ENCODE measurements at regions of chr5 and their contacts with region 1.

Region 1: DNA sequence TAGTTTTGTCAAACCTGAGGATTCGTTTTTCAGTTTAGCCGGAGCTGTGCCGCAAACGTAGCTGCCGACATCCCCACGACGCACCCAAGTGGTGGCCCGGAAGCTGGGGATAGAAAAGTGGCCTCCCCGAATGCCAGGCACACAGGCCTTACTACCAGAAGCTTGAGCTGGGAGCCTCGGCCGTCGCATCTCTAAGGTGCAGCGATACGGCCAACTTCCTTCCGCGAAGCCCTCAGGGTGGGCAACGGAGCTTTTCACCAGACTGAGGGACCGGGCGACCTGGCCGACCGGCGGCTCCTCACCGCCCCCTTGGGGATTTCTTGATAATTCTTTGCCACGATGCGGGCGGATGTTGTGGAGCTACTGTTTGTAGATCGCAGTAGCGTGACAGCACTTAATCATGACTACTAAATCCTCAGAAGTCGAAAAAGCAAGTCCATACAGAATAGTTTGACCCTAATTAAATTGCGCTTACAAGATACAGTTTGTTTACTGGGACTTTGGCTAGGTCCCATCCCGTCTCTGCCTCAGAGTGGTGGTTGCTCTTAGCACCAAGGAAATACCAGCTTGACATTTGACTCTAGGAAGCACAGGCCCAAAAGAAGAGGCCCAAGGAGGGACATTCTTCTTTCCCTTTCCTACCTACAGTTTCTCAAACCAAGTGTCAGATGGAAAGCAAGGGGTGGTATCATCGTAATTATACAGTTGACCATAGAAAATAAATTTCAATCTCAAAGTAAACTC is 613 bp upstream of the TMEM267 start:
- DNase-seq: peak; percentile 69 to 91 (median 88)
- ATAC-seq: peak; percentile 83
- H3K4me3 ChIP-seq: peak overlapping the region; percentile 72
- H3K4me3 Mint-ChIP-seq: peak overlapping the region; percentile 95 to 100 (median 98)
- H3K27ac ChIP-seq: peak overlapping the region; percentile 92
- H3K27ac Mint-ChIP-seq: peak overlapping the region; percentile 97 to 100 (median 100)
- H3K4me1 ChIP-seq: peaks cover 20 to 28% of the 10 kb centered on the region in 2 donors
- H3K4me1 Mint-ChIP-seq: peaks cover 23 to 69% (median 60%) of the 10 kb centered on the region in 7 donors
- H3K27me3 ChIP-seq: no peaks in the 10 kb centered on the region
- H3K27me3 Mint-ChIP-seq: no peaks in the 10 kb centered on the region

Region 2: DNA sequence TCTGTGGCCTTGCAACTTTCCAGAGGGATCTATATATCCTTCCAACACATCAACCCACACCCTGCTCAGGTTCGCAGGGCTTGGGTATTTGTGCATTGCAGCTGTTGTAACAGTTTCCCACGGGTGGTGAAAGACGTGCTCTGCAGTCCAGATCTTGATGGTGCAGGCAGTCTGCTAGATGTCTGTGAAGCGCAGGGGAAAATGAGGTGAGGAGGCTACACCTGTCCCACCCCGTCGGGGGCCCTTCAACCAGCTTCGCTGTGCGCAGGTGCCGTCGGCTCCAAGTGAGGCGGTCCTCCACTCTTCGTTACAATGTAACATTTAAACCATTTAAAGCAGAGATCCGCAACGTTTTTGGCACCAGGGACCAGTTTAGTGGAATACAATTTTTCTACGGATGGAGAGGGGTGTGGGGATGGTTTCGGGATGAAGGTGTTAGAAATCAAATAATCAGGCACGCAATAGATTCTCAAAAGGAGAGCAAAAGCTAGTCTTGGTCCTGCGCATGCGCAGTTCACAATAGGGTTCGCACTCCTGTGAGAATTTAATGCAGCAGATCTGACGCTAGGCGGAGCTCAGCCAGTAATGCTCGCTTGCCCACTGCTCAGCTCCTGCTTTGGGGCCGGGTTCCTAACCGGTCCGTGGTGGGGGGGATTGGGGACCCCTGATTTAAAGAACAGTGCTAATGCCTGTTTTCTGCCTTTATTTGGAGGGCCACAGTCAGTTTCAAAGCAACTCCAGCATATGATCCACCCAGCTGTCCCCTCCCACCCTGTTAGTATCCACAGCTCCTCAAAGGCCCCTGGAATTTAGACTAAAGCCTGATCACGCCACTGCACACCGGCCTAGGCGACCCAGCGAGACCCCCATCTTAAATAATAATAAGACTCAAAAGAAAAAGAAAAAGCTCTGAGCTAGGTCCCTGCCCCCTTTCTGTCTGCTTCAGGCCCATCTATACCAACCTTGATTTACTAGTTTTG is 575.5 kb before region 1 on chr5:
- CTCF ChIA-PET with region 1: interaction called, 8 read pairs
- POLR2A ChIA-PET with region 1: interaction called, 9 read pairs
- intact Hi-C with region 1: loop called (anchors 1 to 10 kb)
- DNase-seq: peak; percentile 76 to 93 (median 88)
- ATAC-seq: peak; percentile 92
- H3K4me3 ChIP-seq: peak overlapping the region; percentile 72
- H3K4me3 Mint-ChIP-seq: peak overlapping the region; percentile 89 to 98 (median 94)
- H3K27ac ChIP-seq: peak overlapping the region; percentile 76
- H3K27ac Mint-ChIP-seq: peak overlapping the region; percentile 64 to 97 (median 95)
- H3K4me1 ChIP-seq: peaks cover 0 to 4% of the 10 kb centered on the region in 2 donors
- H3K4me1 Mint-ChIP-seq: peaks cover 5 to 22% (median 19%) of the 10 kb centered on the region in 7 donors
- H3K27me3 ChIP-seq: no peaks in the 10 kb centered on the region
- H3K27me3 Mint-ChIP-seq: peaks cover 0 to 43% (median 0%) of the 10 kb centered on the region in 5 donors

Region 3: GRCh38 chr5:43019614-43020293 is 464.5 kb before region 1 on chr5:
- CTCF ChIA-PET with region 1: interaction called, 8 read pairs
- POLR2A ChIA-PET with region 1: interaction called, 49 read pairs
- intact Hi-C with region 1: no loop called
- DNase-seq: peak; percentile 63 to 94 (median 88)
- ATAC-seq: peak; percentile 77
- H3K4me3 ChIP-seq: peak overlapping the region; percentile 76
- H3K4me3 Mint-ChIP-seq: peak overlapping the region; percentile 92 to 99 (median 98)
- H3K27ac ChIP-seq: peak overlapping the region; percentile 96
- H3K27ac Mint-ChIP-seq: peak overlapping the region; percentile 96 to 100 (median 99)
- H3K4me1 ChIP-seq: peaks cover 34 to 35% of the 10 kb centered on the region in 2 donors
- H3K4me1 Mint-ChIP-seq: peaks cover 20 to 52% (median 46%) of the 10 kb centered on the region in 7 donors
- H3K27me3 ChIP-seq: no peaks in the 10 kb centered on the region
- H3K27me3 Mint-ChIP-seq: no peaks in the 10 kb centered on the region

Region 4: DNA sequence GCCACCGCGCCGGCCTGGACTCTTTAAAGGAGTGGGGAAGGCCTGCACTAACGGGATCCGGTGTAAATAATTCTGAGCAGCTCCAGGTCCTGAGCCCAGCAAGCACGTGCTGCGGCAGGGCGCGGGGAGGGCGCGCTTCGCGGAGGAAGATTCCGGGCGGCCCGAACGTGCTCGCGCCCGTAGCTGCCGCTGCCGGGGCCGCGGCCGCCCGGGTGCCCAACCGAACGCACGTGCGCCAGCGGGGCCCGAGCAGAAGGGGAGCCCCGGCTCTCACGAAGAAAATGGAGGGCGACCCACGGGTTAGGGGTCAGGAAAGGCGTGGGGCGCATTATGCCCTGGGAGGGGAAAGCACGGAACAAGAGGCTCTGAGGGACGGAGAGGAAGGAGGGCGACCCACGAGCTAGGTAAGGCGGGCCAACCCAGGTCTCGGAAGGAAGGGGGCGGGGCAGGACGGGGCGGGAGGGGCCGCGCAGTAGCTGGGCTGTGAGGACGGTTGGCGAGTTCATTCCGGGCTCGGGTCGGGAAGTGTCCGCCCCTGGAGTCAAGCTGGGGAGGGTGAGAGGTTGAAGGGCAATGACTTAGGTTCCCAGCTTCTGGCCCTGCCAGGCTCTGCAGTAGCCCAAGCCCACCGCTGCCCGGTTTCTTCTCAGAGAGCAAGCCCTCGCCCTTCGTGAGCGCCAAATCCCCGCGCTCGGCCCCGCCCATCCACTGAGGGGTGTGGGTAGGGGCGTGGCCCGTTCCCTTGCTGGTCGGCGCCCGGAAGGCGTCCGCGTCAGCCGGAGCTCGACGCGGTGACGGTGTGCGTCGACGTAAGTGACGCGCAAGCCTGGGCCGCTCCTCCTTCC is 363.3 kb before region 1 on chr5 and contains the start of gene ZNF131:
- CTCF ChIA-PET with region 1: interaction called, 10 read pairs
- POLR2A ChIA-PET with region 1: interaction called, 92 read pairs
- intact Hi-C with region 1: loop called (anchors 1 kb)
- DNase-seq: peak; percentile 95 to 99 (median 98)
- ATAC-seq: peak; percentile 93
- H3K4me3 ChIP-seq: peak within 1 kb of the TSS; percentile 70
- H3K4me3 Mint-ChIP-seq: peak within 1 kb of the TSS; percentile 89 to 98 (median 96)
- H3K27ac ChIP-seq: peak within 1 kb of the TSS; percentile 97
- H3K27ac Mint-ChIP-seq: peak within 1 kb of the TSS; percentile 86 to 99 (median 96)
- H3K4me1 ChIP-seq: peaks cover 27 to 30% of the 10 kb centered on the region in 2 donors
- H3K4me1 Mint-ChIP-seq: peaks cover 22 to 47% (median 44%) of the 10 kb centered on the region in 7 donors
- H3K27me3 ChIP-seq: no peaks in the 10 kb centered on the region
- H3K27me3 Mint-ChIP-seq: peaks cover 0 to 4% (median 0%) of the 10 kb centered on the region in 5 donors
- total RNA-seq, gene ZNF131: 47.2 to 83.4 (median 67.8) TPM

Region 5: DNA sequence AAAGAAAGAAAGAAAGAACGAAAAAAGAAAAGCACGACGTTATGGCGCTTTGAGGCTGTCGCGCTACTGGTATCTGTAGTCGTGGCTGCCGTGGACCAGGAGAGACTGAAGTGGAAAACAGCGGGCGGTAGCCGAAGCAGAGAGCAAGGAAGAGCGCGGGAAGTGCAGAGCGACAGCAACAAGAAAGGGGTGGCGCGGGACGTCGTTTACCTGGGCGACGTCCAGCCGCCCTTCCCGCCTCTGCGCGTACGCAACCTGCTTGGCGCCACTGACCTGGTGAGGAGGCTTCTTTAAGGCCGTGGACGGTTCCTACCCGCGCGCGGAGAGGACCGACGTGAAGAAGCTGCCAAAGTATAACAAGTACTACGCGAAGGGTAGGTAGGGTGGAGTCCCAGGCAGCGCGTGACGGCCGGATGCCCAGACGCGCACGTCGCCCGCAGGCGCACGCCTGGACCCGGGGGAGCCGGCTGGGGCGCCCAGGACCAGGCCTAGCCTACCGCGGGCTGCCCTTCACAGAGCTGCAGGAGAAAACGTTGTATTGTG is 87.4 kb before region 1 on chr5:
- CTCF ChIA-PET with region 1: no interaction called
- POLR2A ChIA-PET with region 1: interaction called, 59 read pairs
- intact Hi-C with region 1: loop called (anchors 1 kb)
- DNase-seq: peak; percentile 42 to 74 (median 66)
- ATAC-seq: peak; percentile 96
- H3K4me3 ChIP-seq: peak overlapping the region; percentile 80
- H3K4me3 Mint-ChIP-seq: peak overlapping the region; percentile 88 to 100 (median 98)
- H3K27ac ChIP-seq: peak overlapping the region; percentile 76
- H3K27ac Mint-ChIP-seq: peak overlapping the region; percentile 93 to 99 (median 97)
- H3K4me1 ChIP-seq: peaks cover 3 to 7% of the 10 kb centered on the region in 2 donors
- H3K4me1 Mint-ChIP-seq: peaks cover 15 to 62% (median 41%) of the 10 kb centered on the region in 7 donors
- H3K27me3 ChIP-seq: no peaks in the 10 kb centered on the region
- H3K27me3 Mint-ChIP-seq: no peaks in the 10 kb centered on the region

Region 6: GRCh38 chr5:43551731-43552130 is 67.5 kb after region 1 on chr5:
- CTCF ChIA-PET with region 1: interaction called, 9 read pairs
- POLR2A ChIA-PET with region 1: interaction called, 47 read pairs
- intact Hi-C with region 1: loop called in 1 of 2 experiments (anchors 1 kb)
- DNase-seq: no peak
- ATAC-seq: no peak
- H3K4me3 ChIP-seq: no peak overlapping the region
- H3K4me3 Mint-ChIP-seq: peak overlapping the region in 1 of 10 donors; percentile 9
- H3K27ac ChIP-seq: peak overlapping the region; percentile 14
- H3K27ac Mint-ChIP-seq: no peak overlapping the region
- H3K4me1 ChIP-seq: peaks cover 17 to 31% of the 10 kb centered on the region in 2 donors
- H3K4me1 Mint-ChIP-seq: peaks cover 8 to 26% (median 18%) of the 10 kb centered on the region in 7 donors
- H3K27me3 ChIP-seq: no peaks in the 10 kb centered on the region
- H3K27me3 Mint-ChIP-seq: no peaks in the 10 kb centered on the region